GM12878 (cell line): ENCODE measurements at regions of chr7 and their contacts with region 1.

Region 1: GRCh38 chr7:66557608-66558143 is 71.0 kb upstream of the KCTD7 start:
- DNase-seq: no peak
- ATAC-seq: peak; percentile 98
- H3K4me3 ChIP-seq: no peak overlapping the region
- H3K27ac ChIP-seq: no peak overlapping the region
- H3K4me1 ChIP-seq: no peaks in the 10 kb centered on the region
- H3K27me3 ChIP-seq: no peaks in the 10 kb centered on the region
- CTCF ChIP-seq: peak; percentile 96 to 100 (median 97)
- EP300 ChIP-seq: no peak
- POLR2A ChIP-seq: no peak; the same call in 1 of the 2 replicates
- RAD21 ChIP-seq: peak; percentile 92

Region 2: DNA sequence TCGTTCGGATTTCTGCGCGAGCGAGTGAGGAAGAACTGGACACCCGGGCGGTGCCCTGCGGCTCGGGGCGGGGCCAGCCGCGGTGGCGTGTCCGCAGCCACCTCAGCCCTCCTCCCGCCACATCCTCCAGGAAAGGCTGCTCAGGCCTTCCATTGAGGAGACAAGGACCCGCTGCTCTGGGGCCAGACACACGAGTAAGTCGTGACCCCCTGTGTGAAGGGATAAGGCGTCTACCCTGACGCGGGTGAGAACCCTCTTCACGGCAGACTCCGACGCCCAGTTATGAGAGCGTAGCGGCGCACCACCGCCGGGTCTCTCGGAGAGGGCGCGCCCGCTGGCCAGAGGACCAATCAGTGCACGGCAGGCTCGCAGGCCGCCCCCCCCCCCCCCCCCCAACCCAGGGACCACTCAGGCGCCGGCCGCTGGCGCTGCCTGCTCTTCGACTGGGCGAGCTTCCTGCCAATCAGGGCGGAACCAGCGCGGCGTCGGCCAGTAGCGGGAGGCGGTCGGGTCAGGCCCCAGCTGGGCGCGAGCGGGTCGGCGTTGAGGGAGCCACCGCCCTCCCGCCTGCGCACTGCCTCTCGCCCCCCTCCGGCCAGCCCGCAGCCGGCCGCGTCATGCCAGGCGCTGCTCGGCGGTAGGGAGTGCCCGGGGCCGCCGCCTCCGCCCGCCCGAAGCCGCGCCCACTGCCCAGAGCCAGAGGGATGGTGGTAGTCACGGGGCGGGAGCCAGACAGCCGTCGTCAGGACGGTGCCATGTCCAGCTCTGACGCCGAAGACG is 70.9 kb after region 1 on chr7 and contains the start of gene KCTD7:
- CTCF ChIA-PET with region 1: interaction called, 10 read pairs
- POLR2A ChIA-PET with region 1: no interaction called
- RAD21 ChIA-PET with region 1: no interaction called
- SMC1A ChIA-PET with region 1: interaction called, 5 read pairs
- in situ Hi-C with region 1: no loop called
- intact Hi-C with region 1: no loop called
- DNase-seq: peak; percentile 80
- ATAC-seq: peak; percentile 94
- H3K4me3 ChIP-seq: peak within 1 kb of the TSS; percentile 88
- H3K27ac ChIP-seq: peak within 1 kb of the TSS; percentile 74
- H3K4me1 ChIP-seq: peaks cover 43% of the 10 kb centered on the region
- H3K27me3 ChIP-seq: no peaks in the 10 kb centered on the region
- CTCF ChIP-seq: no peak
- EP300 ChIP-seq: no peak
- POLR2A ChIP-seq: peak; percentile 99
- RAD21 ChIP-seq: no peak
- polyA plus RNA-seq, gene KCTD7: 1.6 TPM

Region 3: GRCh38 chr7:66687186-66687585 is 129.5 kb after region 1 on chr7:
- CTCF ChIA-PET with region 1: no interaction called
- POLR2A ChIA-PET with region 1: no interaction called
- RAD21 ChIA-PET with region 1: no interaction called
- SMC1A ChIA-PET with region 1: no interaction called
- in situ Hi-C with region 1: no loop called
- intact Hi-C with region 1: no loop called
- DNase-seq: no peak
- ATAC-seq: no peak
- H3K4me3 ChIP-seq: no peak overlapping the region
- H3K27ac ChIP-seq: no peak overlapping the region
- H3K4me1 ChIP-seq: no peaks in the 10 kb centered on the region; the same call in 1 of the 2 replicates
- H3K27me3 ChIP-seq: no peaks in the 10 kb centered on the region
- CTCF ChIP-seq: no peak
- EP300 ChIP-seq: no peak
- POLR2A ChIP-seq: no peak
- RAD21 ChIP-seq: no peak

Region 4: GRCh38 chr7:66779669-66780409 is 222.2 kb after region 1 on chr7:
- CTCF ChIA-PET with region 1: no interaction called
- POLR2A ChIA-PET with region 1: no interaction called
- RAD21 ChIA-PET with region 1: no interaction called
- SMC1A ChIA-PET with region 1: no interaction called
- in situ Hi-C with region 1: no loop called
- intact Hi-C with region 1: loop called (anchors 10 kb)
- DNase-seq: no peak
- ATAC-seq: no peak
- H3K4me3 ChIP-seq: no peak overlapping the region
- H3K27ac ChIP-seq: no peak overlapping the region
- H3K4me1 ChIP-seq: no peaks in the 10 kb centered on the region
- H3K27me3 ChIP-seq: no peaks in the 10 kb centered on the region
- CTCF ChIP-seq: no peak
- EP300 ChIP-seq: no peak
- POLR2A ChIP-seq: no peak
- RAD21 ChIP-seq: no peak

Region 5: DNA sequence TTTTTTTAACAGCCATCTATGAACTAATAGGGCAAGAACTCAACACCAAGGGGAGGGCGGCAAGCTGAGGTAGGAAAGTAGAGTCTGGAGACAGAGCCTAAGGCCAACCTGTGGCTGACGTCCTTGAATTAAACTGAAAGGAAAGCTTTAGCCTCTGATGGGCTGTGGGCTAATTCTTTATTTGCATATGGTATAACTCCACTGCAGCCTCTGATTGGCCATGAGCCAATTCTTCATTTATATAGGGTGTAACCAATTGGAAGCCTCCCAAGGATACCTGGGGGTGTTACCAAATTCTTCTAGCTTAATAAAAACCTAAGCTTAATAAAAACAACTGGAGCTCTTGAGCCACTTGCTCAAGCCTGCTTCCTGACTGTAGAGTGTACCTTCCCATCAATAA is 449.3 kb after region 1 on chr7:
- CTCF ChIA-PET with region 1: no interaction called
- POLR2A ChIA-PET with region 1: no interaction called
- RAD21 ChIA-PET with region 1: no interaction called
- SMC1A ChIA-PET with region 1: no interaction called
- in situ Hi-C with region 1: no loop called
- intact Hi-C with region 1: loop called (anchors 10 kb)
- DNase-seq: no peak
- ATAC-seq: no peak
- H3K4me3 ChIP-seq: no peak overlapping the region
- H3K27ac ChIP-seq: no peak overlapping the region
- H3K4me1 ChIP-seq: no peaks in the 10 kb centered on the region
- H3K27me3 ChIP-seq: no peaks in the 10 kb centered on the region
- CTCF ChIP-seq: no peak
- EP300 ChIP-seq: no peak
- POLR2A ChIP-seq: no peak
- RAD21 ChIP-seq: no peak